ENCODE measurements at regions of chr12 and their contacts with region 1.

Region 1: GRCh38 chr12:64780531-64781279 is 21.5 kb upstream of the GNS start:
- DNase-seq: peak in 2 of 3 donors; percentile 28 to 43
- H3K4me3 ChIP-seq: peak overlapping the region; percentile 41 to 72 (median 57)
- H3K27ac ChIP-seq: no peak overlapping the region
- H3K4me1 ChIP-seq: peaks cover 6 to 29% (median 26%) of the 10 kb centered on the region in 4 experiments
- H3K27me3 ChIP-seq: peaks cover 15 to 47% (median 24%) of the 10 kb centered on the region in 5 experiments

Region 2: DNA sequence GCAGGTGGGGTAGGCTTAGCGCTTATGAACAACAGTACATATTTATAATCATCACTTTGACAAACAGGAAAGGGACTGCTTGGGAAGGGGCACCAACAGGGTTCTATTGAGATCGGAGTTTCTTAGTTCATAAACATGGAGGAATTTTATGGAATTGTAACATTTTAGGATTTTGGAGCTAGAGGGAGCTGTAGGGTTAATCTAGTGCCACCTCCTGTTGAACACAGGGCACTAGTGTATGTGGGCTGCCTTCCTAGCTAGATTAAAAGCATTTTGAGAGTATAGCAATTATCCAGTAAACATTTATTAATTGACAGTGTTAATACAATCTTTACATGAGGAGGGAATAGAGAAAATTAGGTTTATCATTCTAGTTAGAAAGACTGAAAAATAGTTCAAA is 20.7 kb after region 1 on chr12:
- CTCF ChIA-PET with region 1: interaction called, 24 read pairs
- POLR2A ChIA-PET with region 1: interaction called, 3 read pairs
- DNase-seq: no peak
- H3K4me3 ChIP-seq: no peak overlapping the region
- H3K27ac ChIP-seq: no peak overlapping the region
- H3K4me1 ChIP-seq: no peaks in the 10 kb centered on the region
- H3K27me3 ChIP-seq: peaks cover 0 to 6% (median 0%) of the 10 kb centered on the region in 5 experiments